GM12878 (cell line): ENCODE measurements at regions of chr5 and their contacts with region 1.

Region 1: DNA sequence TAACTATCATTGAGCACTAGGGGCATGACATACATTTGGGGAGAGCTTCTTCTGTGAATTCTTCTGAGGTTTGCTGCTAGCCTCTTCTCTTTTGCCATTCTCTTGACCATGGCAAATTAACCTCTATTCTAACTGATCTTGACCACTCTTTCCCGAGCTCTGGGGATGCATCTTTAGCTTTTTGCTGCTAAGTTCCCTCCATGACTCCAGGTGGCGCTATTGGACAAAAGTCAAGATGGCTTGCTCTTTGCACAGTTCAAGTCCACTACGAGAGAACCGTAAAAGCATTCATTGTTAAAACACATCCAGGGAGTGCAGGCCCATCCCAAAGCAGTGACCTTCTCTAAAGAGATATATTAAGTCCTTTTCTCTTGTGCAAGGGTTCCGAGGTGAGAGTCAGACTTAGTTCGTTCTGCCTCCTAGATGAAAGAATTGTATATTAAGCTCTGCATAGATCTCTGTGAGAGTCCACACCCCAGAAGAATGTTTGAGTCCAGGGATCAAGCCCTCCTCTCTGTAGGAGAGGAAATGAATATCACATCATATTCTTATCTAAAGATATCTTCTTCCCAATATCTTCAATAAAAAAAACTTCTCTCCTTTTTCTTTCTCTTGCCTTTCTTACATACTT is 1152.9 kb upstream of the CDH6 start:
- DNase-seq: no peak
- ATAC-seq: peak; percentile 81
- H3K4me3 ChIP-seq: no peak overlapping the region
- H3K27ac ChIP-seq: no peak overlapping the region
- H3K4me1 ChIP-seq: no peaks in the 10 kb centered on the region
- H3K27me3 ChIP-seq: no peaks in the 10 kb centered on the region
- CTCF ChIP-seq: peak; percentile 50 to 69 (median 67); a peak in 5 of 6 replicates
- EP300 ChIP-seq: no peak
- POLR2A ChIP-seq: no peak
- RAD21 ChIP-seq: peak; percentile 67

Region 2: GRCh38 chr5:30001826-30002225 is 38.8 kb before region 1 on chr5:
- CTCF ChIA-PET with region 1: no interaction called
- POLR2A ChIA-PET with region 1: no interaction called
- RAD21 ChIA-PET with region 1: no interaction called
- SMC1A ChIA-PET with region 1: no interaction called
- in situ Hi-C with region 1: no loop called
- intact Hi-C with region 1: no loop called
- DNase-seq: no peak
- ATAC-seq: no peak
- H3K4me3 ChIP-seq: no peak overlapping the region
- H3K27ac ChIP-seq: no peak overlapping the region
- H3K4me1 ChIP-seq: no peaks in the 10 kb centered on the region
- H3K27me3 ChIP-seq: no peaks in the 10 kb centered on the region
- CTCF ChIP-seq: no peak
- EP300 ChIP-seq: no peak
- POLR2A ChIP-seq: no peak
- RAD21 ChIP-seq: no peak

Region 3: GRCh38 chr5:31186672-31187267 is 1146.2 kb after region 1 on chr5:
- CTCF ChIA-PET with region 1: interaction called, 14 read pairs
- POLR2A ChIA-PET with region 1: no interaction called
- RAD21 ChIA-PET with region 1: interaction called, 7 read pairs
- SMC1A ChIA-PET with region 1: interaction called, 7 read pairs
- in situ Hi-C with region 1: no loop called
- intact Hi-C with region 1: loop called (anchors 5 kb)
- DNase-seq: no peak
- ATAC-seq: peak; percentile 42; the same call in 1 of the 3 replicates
- H3K4me3 ChIP-seq: no peak overlapping the region
- H3K27ac ChIP-seq: no peak overlapping the region
- H3K4me1 ChIP-seq: no peaks in the 10 kb centered on the region
- H3K27me3 ChIP-seq: no peaks in the 10 kb centered on the region
- CTCF ChIP-seq: peak; percentile 52 to 78 (median 72)
- EP300 ChIP-seq: no peak
- POLR2A ChIP-seq: no peak
- RAD21 ChIP-seq: peak; percentile 43; the same call in 1 of the 2 replicates

Region 4: GRCh38 chr5:31270396-31270795 is 1229.8 kb after region 1 on chr5:
- CTCF ChIA-PET with region 1: interaction called, 17 read pairs
- POLR2A ChIA-PET with region 1: no interaction called
- RAD21 ChIA-PET with region 1: interaction called, 5 read pairs
- SMC1A ChIA-PET with region 1: interaction called, 5 read pairs
- in situ Hi-C with region 1: no loop called
- intact Hi-C with region 1: no loop called
- DNase-seq: no peak
- ATAC-seq: no peak
- H3K4me3 ChIP-seq: no peak overlapping the region
- H3K27ac ChIP-seq: no peak overlapping the region
- H3K4me1 ChIP-seq: peaks cover 3% of the 10 kb centered on the region; the same call in 1 of the 2 replicates
- H3K27me3 ChIP-seq: no peaks in the 10 kb centered on the region
- CTCF ChIP-seq: peak; percentile 33 to 42 (median 41); a peak in 4 of 6 replicates
- EP300 ChIP-seq: no peak
- POLR2A ChIP-seq: no peak
- RAD21 ChIP-seq: peak; percentile 37